PC-9 (cell line): ENCODE measurements at regions of chr22 and their contacts with region 1.

Region 1: GRCh38 chr22:20568989-20569769 is 61.8 kb downstream of the MED15 start:
- DNase-seq: peak; percentile 85 to 96
- H3K4me3 ChIP-seq: no peak overlapping the region; the same call in 1 of the 2 replicates
- H3K27ac ChIP-seq: peak overlapping the region; percentile 97
- H3K4me1 ChIP-seq: peaks cover 66% of the 10 kb centered on the region
- H3K27me3 ChIP-seq: no peaks in the 10 kb centered on the region
- CTCF ChIP-seq: no peak

Region 2: DNA sequence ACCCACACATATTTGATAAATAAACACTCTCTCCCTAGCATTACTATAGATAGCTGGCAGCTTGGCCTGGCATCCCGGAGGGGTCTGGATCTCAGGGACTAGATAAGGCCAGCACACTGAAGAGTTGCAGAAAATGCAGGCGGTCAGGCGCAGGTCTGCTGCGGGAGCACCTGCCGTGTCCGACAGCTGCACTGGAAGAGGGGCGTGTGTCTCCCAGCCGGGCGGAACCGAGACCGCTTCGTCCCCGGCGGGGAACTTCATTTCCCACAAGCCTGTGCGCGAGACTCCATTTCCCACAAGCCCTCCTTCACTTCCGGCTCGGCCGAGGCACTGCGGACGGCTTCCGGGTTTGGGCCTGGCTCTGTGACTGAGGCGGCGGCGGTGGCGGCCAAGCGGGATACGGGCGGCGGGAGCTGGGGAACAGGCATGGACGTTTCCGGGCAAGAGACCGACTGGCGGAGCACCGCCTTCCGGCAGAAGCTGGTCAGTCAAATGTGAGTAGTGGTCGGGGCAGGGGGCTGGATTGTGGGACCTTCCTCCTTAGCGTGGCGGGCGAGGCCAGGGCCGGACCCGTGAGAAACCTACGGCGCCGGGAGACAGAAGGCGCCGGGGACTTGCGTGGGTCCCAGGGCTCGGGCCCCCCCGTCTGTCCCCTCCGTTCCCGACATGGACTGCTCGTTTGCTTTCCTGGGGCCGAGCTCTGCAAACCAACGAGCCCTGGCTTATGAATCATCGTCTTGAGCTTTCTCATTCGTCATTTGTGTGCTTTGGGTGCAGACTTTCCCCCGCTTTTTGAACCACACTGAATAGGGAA is 61.7 kb before region 1 on chr22 and contains the start of gene MED15:
- CTCF ChIA-PET with region 1: interaction called, 3 read pairs
- POLR2A ChIA-PET with region 1: interaction called, 5 read pairs
- intact Hi-C with region 1: loop called (anchors 1 kb)
- DNase-seq: peak; percentile 74 to 76
- H3K4me3 ChIP-seq: peak within 1 kb of the TSS; percentile 66
- H3K27ac ChIP-seq: peak within 1 kb of the TSS; percentile 98
- H3K4me1 ChIP-seq: peaks cover 35% of the 10 kb centered on the region
- H3K27me3 ChIP-seq: no peaks in the 10 kb centered on the region
- CTCF ChIP-seq: no peak
- total RNA-seq, gene MED15: 82.0 and 87.9 TPM in 2 replicates

Region 3: GRCh38 chr22:20531315-20532201 is 37.6 kb before region 1 on chr22:
- CTCF ChIA-PET with region 1: interaction called, 4 read pairs
- POLR2A ChIA-PET with region 1: interaction called, 3 read pairs
- intact Hi-C with region 1: loop called (anchors 1 kb)
- DNase-seq: peak; percentile 85 to 91
- H3K4me3 ChIP-seq: peak overlapping the region; percentile 33; the same call in 1 of the 2 replicates
- H3K27ac ChIP-seq: peak overlapping the region; percentile 97
- H3K4me1 ChIP-seq: peaks cover 56% of the 10 kb centered on the region
- H3K27me3 ChIP-seq: no peaks in the 10 kb centered on the region
- CTCF ChIP-seq: no peak

Region 4: DNA sequence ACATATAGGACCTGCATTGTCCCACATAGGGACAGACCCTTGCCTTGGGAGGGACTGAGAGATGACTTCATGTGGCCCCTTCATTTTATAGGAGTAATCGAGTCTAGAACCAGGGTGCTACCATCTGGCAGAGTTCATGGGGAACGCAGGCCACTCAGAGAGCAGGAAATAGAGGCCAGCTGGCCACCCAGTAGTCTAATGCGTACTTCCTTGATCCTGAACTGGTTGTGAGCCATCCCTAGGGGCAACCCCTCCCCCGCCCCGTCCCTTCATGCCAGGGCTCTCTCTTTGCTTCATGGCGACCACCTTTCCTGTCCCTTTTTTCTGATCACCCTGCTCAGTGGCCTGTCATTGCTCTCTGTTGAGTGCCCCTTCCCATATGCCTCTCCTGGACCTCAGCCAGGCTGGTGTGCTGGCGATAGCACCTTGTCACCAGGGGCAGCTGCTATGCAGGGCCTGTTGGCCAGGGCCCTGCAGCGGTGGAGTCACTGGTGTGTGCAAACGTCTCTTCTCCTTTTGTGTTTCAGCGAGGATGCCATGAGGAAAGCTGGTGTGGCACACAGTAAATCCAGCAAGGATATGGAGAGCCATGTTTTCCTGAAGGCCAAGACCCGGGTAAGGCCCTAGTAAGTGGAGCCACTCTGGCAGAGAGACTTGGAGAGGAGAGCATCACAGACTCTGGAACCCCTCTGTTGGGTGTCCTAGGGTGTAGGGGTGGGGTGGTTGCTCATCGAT is 32.4 kb before region 1 on chr22:
- CTCF ChIA-PET with region 1: interaction called, 10 read pairs
- POLR2A ChIA-PET with region 1: interaction called, 3 read pairs
- intact Hi-C with region 1: loop called (anchors 1 kb)
- DNase-seq: no peak
- H3K4me3 ChIP-seq: no peak overlapping the region
- H3K27ac ChIP-seq: no peak overlapping the region
- H3K4me1 ChIP-seq: peaks cover 16% of the 10 kb centered on the region
- H3K27me3 ChIP-seq: no peaks in the 10 kb centered on the region
- CTCF ChIP-seq: no peak

Region 5: DNA sequence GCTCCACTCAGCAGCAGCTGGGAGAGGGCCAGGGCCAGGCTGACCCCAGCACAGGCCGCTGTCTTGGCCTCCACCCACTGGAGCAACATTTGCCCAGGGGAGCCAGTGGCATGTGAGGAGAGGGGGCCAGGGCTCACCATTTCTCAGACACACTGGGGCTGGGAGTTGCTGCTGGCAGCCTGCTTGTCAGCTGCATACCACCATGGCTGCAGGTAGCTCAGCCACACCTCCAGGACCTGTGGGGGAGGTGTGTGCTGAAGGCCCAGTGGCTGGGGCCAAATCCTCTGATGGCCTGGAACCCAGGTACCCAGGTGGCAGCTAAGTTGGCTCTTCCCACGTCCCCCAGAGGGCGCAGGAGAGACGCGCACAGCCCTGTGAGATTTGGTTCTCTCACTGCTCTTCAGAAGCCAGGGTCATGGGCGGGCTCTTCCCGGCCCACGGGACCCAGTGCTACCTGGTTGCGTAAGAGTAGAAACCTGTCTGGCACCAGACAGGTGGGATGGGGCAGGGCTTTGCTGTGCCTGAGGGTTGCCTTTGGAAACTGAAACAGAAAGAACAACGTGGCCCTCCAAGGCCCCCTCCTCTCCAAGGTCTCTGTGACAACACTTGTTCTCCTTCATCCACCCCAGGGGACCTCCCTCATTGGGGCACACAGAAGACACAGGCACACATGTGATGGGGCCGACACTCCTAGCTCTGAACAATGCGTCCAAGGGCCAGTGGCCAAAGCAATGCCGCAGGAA is 37.0 kb after region 1 on chr22:
- CTCF ChIA-PET with region 1: interaction called, 3 read pairs
- POLR2A ChIA-PET with region 1: no interaction called
- intact Hi-C with region 1: loop called (anchors 2 kb)
- DNase-seq: peak; percentile 74 to 79
- H3K4me3 ChIP-seq: no peak overlapping the region
- H3K27ac ChIP-seq: no peak overlapping the region
- H3K4me1 ChIP-seq: no peaks in the 10 kb centered on the region
- H3K27me3 ChIP-seq: no peaks in the 10 kb centered on the region
- CTCF ChIP-seq: peak; percentile 73